HEK293 (cell line): ENCODE measurements at regions of chr12 and their contacts with region 1.

Region 1: DNA sequence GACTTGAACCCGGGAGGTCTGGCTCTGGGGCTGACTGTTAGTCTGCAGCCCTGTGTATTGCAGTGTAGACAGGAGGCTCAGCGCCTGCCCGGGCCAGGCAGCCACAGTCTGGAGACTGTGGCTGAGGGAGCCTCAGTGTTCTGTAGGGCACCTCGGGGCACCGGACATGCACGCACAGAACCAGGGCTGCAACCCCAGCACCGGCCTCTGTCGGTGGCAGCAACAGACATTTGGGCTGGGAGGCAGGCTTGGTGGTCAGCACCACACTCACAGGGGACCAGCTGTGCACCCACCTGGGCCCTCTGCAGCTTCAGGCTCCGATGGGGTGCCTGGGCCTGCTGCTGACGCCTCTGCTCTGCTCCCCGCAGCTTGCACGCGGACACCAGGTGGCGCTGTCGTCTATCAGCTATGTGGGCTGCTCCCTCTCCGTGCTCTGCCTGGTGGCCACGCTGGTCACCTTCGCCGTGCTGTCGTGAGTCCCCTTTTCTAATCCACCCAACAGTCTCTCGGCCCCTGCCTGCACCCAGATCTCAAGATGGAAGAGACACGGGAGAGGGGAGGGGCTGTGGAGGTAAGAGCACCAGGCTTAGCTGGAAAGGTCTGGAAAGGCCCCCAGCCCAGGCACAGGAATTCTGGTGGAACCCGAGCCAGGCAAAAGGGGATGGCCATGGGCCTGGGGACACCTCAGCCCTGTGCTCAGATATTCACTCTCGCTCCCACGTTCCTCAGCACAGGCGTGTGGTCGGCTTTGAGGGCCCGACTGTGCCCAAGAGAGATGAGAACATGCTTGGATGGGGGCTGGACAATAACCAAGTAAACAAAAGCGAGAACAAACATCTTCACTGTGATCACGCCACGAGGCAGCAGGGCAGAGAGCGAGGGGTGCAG is 151.0 kb downstream of the ADGRD1 start:
- H3K4me3 ChIP-seq: no peak overlapping the region
- H3K27ac ChIP-seq: no peak overlapping the region
- H3K4me1 ChIP-seq: no peaks in the 10 kb centered on the region
- CTCF ChIP-seq: peak; percentile 95

Region 2: GRCh38 chr12:130916251-130916911 is 188.3 kb before region 1 on chr12:
- CTCF ChIA-PET with region 1: interaction called, 22 read pairs
- POLR2A ChIA-PET with region 1: no interaction called
- H3K4me3 ChIP-seq: peak overlapping the region; percentile 16; the same call in 1 of the 2 replicates
- H3K27ac ChIP-seq: no peak overlapping the region
- H3K4me1 ChIP-seq: no peaks in the 10 kb centered on the region
- CTCF ChIP-seq: peak; percentile 94

Region 3: GRCh38 chr12:131116391-131117117 is 11.8 kb after region 1 on chr12:
- CTCF ChIA-PET with region 1: interaction called, 31 read pairs
- POLR2A ChIA-PET with region 1: no interaction called
- H3K4me3 ChIP-seq: no peak overlapping the region
- H3K27ac ChIP-seq: no peak overlapping the region
- H3K4me1 ChIP-seq: no peaks in the 10 kb centered on the region
- CTCF ChIP-seq: 0 out of 2 replicates have a peak, but pooled peaks have one; percentile 34

Region 4: GRCh38 chr12:131132118-131132892 is 27.6 kb after region 1 on chr12:
- CTCF ChIA-PET with region 1: interaction called, 70 read pairs
- POLR2A ChIA-PET with region 1: no interaction called
- H3K4me3 ChIP-seq: no peak overlapping the region
- H3K27ac ChIP-seq: no peak overlapping the region
- H3K4me1 ChIP-seq: no peaks in the 10 kb centered on the region
- CTCF ChIP-seq: peak; percentile 85

Region 5: GRCh38 chr12:131137836-131138637 is 33.3 kb after region 1 on chr12:
- CTCF ChIA-PET with region 1: interaction called, 70 read pairs
- POLR2A ChIA-PET with region 1: no interaction called
- H3K4me3 ChIP-seq: no peak overlapping the region
- H3K27ac ChIP-seq: no peak overlapping the region
- H3K4me1 ChIP-seq: no peaks in the 10 kb centered on the region
- CTCF ChIP-seq: no peak

Region 6: DNA sequence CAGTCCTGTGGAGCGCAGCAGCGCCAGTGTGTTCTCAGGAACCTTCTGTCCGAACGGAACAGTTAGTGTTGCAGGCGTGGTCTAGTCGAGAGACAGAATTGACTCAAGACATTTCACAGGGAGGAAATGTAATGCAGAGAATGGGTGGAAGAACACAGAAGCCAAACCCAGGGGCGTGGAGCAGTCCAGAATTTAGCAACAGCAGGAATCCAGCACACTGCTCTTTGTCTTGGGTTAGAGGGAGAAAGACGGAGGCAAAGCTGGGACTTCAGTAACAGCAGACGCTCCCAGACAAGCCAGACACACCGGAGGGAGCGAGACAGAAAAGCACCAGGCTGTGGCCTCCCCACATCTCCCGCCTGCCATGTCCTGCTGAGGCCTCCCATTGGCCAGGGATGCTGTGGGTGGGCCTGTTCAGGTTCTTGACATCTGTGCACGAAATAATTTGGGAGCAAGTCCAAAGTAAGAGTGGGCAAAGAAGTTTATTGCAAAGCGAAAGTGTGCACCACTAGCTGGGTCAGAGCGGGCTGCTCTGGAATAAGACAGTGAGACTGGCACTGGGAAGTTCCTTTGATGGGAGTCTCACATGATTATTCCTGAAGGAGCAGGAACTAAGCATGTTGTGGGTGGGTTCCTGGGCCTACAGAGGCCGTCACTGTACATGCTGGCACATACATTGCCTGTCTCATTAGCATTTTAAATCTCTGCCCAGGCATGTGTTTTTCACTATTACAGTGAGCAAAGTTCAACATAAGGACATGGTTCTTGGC is 266.9 kb after region 1 on chr12:
- CTCF ChIA-PET with region 1: no interaction called
- POLR2A ChIA-PET with region 1: no interaction called
- H3K4me3 ChIP-seq: no peak overlapping the region
- H3K27ac ChIP-seq: no peak overlapping the region
- H3K4me1 ChIP-seq: no peaks in the 10 kb centered on the region
- CTCF ChIP-seq: no peak

Region 7: GRCh38 chr12:131454418-131455217 is 349.9 kb after region 1 on chr12:
- CTCF ChIA-PET with region 1: interaction called, 23 read pairs
- POLR2A ChIA-PET with region 1: no interaction called
- H3K4me3 ChIP-seq: no peak overlapping the region
- H3K27ac ChIP-seq: no peak overlapping the region
- H3K4me1 ChIP-seq: no peaks in the 10 kb centered on the region
- CTCF ChIP-seq: peak; percentile 77